Gastrocnemius medialis (tissue), 4 donors: ENCODE measurements at regions of chr16 and their contacts with region 1.

Region 1: DNA sequence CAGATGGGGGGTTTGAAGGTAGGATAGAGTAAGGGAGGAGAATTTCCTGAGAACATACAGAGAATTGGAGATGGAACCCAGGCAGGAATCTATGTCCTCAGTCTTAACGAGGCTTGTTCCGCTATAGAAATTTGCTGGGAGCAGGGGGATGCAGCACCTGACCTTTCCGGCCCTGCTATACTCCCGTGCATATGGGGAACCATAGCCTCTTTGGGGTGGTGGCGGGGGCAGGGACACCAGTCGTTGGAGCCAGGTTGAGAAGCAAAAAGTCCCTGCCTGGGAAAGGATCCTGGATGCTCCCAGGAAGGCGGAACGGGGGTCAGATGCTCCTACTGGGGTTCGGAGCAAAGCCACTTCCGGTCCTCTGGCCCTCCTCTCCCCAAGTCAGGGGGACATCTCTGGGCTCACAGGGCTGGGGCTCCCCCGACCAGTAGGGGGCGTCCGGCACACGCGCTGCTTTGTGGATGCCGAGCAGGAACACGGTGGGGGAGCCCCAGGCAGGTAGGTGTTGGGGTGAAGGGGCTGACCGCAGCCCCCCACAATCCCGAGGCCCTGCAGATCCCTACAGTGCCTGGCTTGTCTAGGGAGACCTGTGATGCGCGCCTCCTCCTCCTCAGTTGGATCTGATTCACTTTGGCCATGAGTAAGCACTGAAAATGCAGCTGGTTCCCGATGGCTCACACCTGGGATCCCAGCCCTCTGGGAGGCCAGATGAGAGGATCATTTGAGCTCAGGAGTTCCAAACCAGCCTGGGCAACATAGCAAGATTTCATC is 15.5 kb upstream of the TFAP4 start:
- DNase-seq: peak; percentile 47 to 61
- ATAC-seq: peak; percentile 56 to 61
- H3K4me3 ChIP-seq: peak overlapping the region in 1 of 4 donors; percentile 21
- H3K27ac ChIP-seq: peak overlapping the region in 1 of 4 donors; percentile 30
- H3K4me1 ChIP-seq: peaks cover 28 to 41% of the 10 kb centered on the region in 2 donors
- H3K27me3 ChIP-seq: no peaks in the 10 kb centered on the region
- CTCF ChIP-seq: peak; percentile 89 to 99 (median 96)
- POLR2A ChIP-seq: no peak

Region 2: GRCh38 chr16:4402439-4403132 is 114.3 kb after region 1 on chr16:
- in situ Hi-C with region 1: loop called in 1 of 4 experiments (anchors 5 kb)
- intact Hi-C with region 1: loop called (anchors 1 kb)
- DNase-seq: peak; percentile 54 to 71
- ATAC-seq: peak; percentile 87 to 98
- H3K4me3 ChIP-seq: no peak overlapping the region
- H3K27ac ChIP-seq: no peak overlapping the region
- H3K4me1 ChIP-seq: no peaks in the 10 kb centered on the region
- H3K27me3 ChIP-seq: no peaks in the 10 kb centered on the region
- CTCF ChIP-seq: peak; percentile 93 to 97 (median 96)
- POLR2A ChIP-seq: no peak

Region 3: GRCh38 chr16:4416200-4417032 is 128.1 kb after region 1 on chr16 and contains the start of gene CORO7:
- in situ Hi-C with region 1: loop called in 1 of 4 experiments (anchors 10 kb)
- intact Hi-C with region 1: no loop called
- DNase-seq: peak; percentile 93 to 96
- ATAC-seq: peak; percentile 90 to 93
- H3K4me3 ChIP-seq: peak within 1 kb of the TSS; percentile 65 to 92 (median 78)
- H3K27ac ChIP-seq: peak within 1 kb of the TSS; percentile 61 to 71 (median 65)
- H3K4me1 ChIP-seq: peaks cover 3 to 9% of the 10 kb centered on the region in 2 donors
- H3K27me3 ChIP-seq: no peaks in the 10 kb centered on the region
- CTCF ChIP-seq: peak in 2 of 5 experiments; percentile 18 to 30
- POLR2A ChIP-seq: peak; percentile 73 to 79
- total RNA-seq, gene CORO7: 5.7 to 15.3 (median 7.2) TPM

Region 4: GRCh38 chr16:4435337-4436067 is 147.2 kb after region 1 on chr16:
- in situ Hi-C with region 1: no loop called
- intact Hi-C with region 1: no loop called
- DNase-seq: no peak
- ATAC-seq: no peak
- H3K4me3 ChIP-seq: no peak overlapping the region
- H3K27ac ChIP-seq: no peak overlapping the region
- H3K4me1 ChIP-seq: no peaks in the 10 kb centered on the region
- H3K27me3 ChIP-seq: no peaks in the 10 kb centered on the region
- CTCF ChIP-seq: no peak
- POLR2A ChIP-seq: no peak